ENCODE measurements at regions of chr7 and their contacts with region 1.

Region 1: GRCh38 chr7:42940985-42941847 is 9.0 kb downstream of the MRPL32 start:
- DNase-seq: peak; percentile 94
- H3K4me3 Mint-ChIP-seq: no peak overlapping the region
- H3K27ac Mint-ChIP-seq: no peak overlapping the region
- H3K4me1 Mint-ChIP-seq: peaks cover 47% of the 10 kb centered on the region
- H3K27me3 Mint-ChIP-seq: no peaks in the 10 kb centered on the region

Region 2: DNA sequence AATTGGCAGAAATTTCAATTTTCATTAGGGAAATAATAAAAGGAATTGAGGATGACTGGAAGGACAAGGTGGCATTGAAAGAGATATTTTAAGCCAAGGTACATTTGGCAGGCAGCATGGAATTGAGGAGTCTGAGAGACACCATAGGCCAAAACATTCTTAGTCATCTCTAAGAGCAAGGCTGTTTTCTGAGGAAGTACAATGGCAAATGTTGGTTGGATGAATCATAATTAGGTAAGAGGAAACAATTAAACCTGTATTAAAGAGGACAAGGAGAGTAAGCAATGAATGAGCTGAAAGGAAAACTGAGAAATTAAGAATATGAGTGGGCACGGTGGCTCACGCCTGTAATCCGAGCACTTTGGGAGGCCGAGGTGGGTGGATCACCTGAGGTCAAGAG is 77.2 kb after region 1 on chr7:
- CTCF ChIA-PET with region 1: no interaction called
- intact Hi-C with region 1: no loop called
- DNase-seq: no peak
- H3K4me3 Mint-ChIP-seq: no peak overlapping the region
- H3K27ac Mint-ChIP-seq: no peak overlapping the region
- H3K4me1 Mint-ChIP-seq: no peaks in the 10 kb centered on the region
- H3K27me3 Mint-ChIP-seq: peaks cover 12% of the 10 kb centered on the region

Region 3: DNA sequence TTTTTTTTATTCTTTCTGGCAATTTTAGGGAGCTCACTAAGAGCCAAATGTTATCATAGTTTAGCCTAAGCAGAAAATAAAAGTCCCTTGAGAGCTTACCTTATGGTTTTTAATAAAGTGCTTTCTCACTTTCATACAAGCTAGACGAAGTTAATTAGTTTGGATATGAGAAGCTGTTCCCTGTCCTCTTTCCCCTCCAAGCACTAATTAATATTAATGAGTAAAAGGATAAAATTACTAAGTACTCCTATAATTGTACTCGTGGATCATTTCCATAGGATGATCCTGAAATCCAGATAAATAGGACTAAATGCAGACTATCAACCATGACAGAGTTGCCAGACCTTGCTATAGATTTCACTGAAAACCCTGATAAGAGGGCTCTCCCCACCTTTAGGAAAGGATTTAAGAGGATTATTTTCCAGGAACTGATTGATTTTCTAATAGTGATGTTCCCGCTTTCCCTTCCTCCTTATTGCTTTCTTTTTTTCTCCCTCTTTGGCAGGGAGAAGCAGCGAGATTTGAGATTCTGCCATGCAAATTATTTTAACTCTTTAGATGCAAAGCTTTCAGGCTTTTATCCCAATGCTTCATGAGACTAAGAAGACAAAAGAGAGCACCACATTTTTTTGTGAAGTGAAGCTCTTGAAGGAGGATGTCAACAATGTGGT is 113.0 kb after region 1 on chr7:
- CTCF ChIA-PET with region 1: no interaction called
- intact Hi-C with region 1: no loop called
- DNase-seq: no peak
- H3K4me3 Mint-ChIP-seq: no peak overlapping the region
- H3K27ac Mint-ChIP-seq: no peak overlapping the region
- H3K4me1 Mint-ChIP-seq: no peaks in the 10 kb centered on the region
- H3K27me3 Mint-ChIP-seq: peaks cover 15% of the 10 kb centered on the region

Region 4: GRCh38 chr7:43071604-43072003 is 130.4 kb after region 1 on chr7:
- CTCF ChIA-PET with region 1: interaction called, 8 read pairs
- intact Hi-C with region 1: loop called (anchors 1 kb)
- DNase-seq: peak; percentile 47
- H3K4me3 Mint-ChIP-seq: no peak overlapping the region
- H3K27ac Mint-ChIP-seq: no peak overlapping the region
- H3K4me1 Mint-ChIP-seq: peaks cover 6% of the 10 kb centered on the region
- H3K27me3 Mint-ChIP-seq: peaks cover 26% of the 10 kb centered on the region

Region 5: GRCh38 chr7:43164757-43165156 is 223.5 kb after region 1 on chr7:
- CTCF ChIA-PET with region 1: no interaction called
- intact Hi-C with region 1: loop called (anchors 5 kb)
- DNase-seq: no peak
- H3K4me3 Mint-ChIP-seq: no peak overlapping the region
- H3K27ac Mint-ChIP-seq: no peak overlapping the region
- H3K4me1 Mint-ChIP-seq: no peaks in the 10 kb centered on the region
- H3K27me3 Mint-ChIP-seq: peaks cover 5% of the 10 kb centered on the region

Region 6: DNA sequence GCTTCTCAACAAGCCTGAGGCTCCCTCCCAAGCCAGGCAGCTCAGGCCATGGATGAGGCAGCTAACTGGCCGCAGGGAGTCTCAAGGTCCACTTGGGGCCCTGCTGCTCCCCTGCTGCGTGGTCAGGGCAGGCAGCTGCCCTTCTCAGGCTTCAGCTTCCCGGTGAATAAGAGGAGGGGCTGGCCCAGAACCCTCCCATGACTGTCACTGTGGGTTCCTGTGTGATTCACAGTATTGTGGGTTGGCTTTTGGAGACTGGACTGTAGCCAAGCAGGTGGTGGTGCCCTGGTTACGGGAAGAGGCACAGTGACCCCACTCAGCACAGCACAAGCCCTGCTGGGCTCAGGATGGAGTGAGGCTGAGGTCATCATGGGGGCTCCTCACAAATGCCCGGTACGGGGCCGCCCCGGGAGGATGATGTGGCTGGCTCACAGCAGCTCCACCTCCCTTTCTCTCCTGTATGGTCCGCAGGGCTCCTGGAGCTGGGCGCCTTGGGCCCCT is 361.0 kb after region 1 on chr7:
- CTCF ChIA-PET with region 1: interaction called, 3 read pairs
- intact Hi-C with region 1: loop called (anchors 1 kb)
- DNase-seq: peak; percentile 73
- H3K4me3 Mint-ChIP-seq: no peak overlapping the region
- H3K27ac Mint-ChIP-seq: no peak overlapping the region
- H3K4me1 Mint-ChIP-seq: peaks cover 36% of the 10 kb centered on the region
- H3K27me3 Mint-ChIP-seq: no peaks in the 10 kb centered on the region

Region 7: DNA sequence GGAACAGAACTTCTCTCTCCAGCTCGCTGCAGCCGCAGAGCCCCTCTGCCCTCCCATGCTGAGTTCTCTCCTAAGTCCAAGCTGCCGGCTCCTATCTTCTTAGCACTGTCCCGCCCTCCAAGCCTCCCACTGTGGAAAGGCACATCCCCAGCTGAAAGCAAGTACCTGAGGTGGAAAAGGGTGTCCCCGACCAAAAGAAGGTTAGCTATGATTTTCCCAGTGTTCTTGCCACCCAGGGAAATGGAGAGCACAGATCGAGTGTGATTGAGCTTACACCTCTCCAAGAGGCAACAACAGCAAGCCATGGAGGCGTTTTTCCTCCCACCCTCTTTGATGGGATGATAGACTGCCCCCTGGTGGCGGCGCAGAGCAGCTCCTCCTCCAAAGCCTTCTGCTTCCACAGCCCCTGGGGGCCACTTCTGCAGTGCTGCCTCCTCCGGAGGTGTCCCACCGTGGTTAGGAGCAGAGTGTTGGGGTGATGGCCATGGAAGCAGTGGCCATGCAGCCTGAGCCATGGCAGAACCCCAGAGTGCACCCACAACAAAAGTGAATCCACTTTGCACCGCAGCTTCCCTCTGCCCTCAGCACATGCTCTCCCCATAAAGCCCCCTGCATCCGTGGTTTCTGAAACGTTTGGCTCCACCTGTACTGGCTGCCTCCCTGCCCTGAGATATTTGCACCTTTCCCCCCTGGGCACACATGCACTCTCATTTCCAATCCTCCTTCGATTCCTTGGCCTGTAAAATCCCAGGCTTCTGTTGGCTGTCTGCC is 498.6 kb after region 1 on chr7:
- CTCF ChIA-PET with region 1: interaction called, 3 read pairs
- intact Hi-C with region 1: loop called (anchors 1 kb)
- DNase-seq: peak; percentile 72
- H3K4me3 Mint-ChIP-seq: no peak overlapping the region
- H3K27ac Mint-ChIP-seq: no peak overlapping the region
- H3K4me1 Mint-ChIP-seq: peaks cover 5% of the 10 kb centered on the region
- H3K27me3 Mint-ChIP-seq: no peaks in the 10 kb centered on the region

Measured in activated naive CD4-positive, alpha-beta T cell treated with anti-CD3 and anti-CD28 coated beads for 36 hours (primary cell).